B cell (primary cell): ENCODE measurements at regions of chr10 and their contacts with region 1.

Region 1: GRCh38 chr10:72048450-72049124 is 39.8 kb downstream of the SPOCK2 start:
- DNase-seq: peak; percentile 91
- ATAC-seq: peak; percentile 98
- H3K4me3 ChIP-seq: no peak overlapping the region
- H3K4me3 Mint-ChIP-seq: no peak overlapping the region
- H3K27ac ChIP-seq: no peak overlapping the region
- H3K27ac Mint-ChIP-seq: no peak overlapping the region
- H3K4me1 ChIP-seq: no peaks in the 10 kb centered on the region
- H3K4me1 Mint-ChIP-seq: no peaks in the 10 kb centered on the region
- H3K27me3 ChIP-seq: no peaks in the 10 kb centered on the region
- H3K27me3 Mint-ChIP-seq: no peaks in the 10 kb centered on the region
- CTCF ChIP-seq: peak; percentile 99

Region 2: GRCh38 chr10:71899665-71900412 is 148.7 kb before region 1 on chr10:
- CTCF ChIA-PET with region 1: interaction called, 26 read pairs
- POLR2A ChIA-PET with region 1: no interaction called
- intact Hi-C with region 1: loop called (anchors 1 kb)
- DNase-seq: peak; percentile 36
- ATAC-seq: peak; percentile 26
- H3K4me3 ChIP-seq: no peak overlapping the region
- H3K4me3 Mint-ChIP-seq: no peak overlapping the region
- H3K27ac ChIP-seq: no peak overlapping the region
- H3K27ac Mint-ChIP-seq: no peak overlapping the region
- H3K4me1 ChIP-seq: peaks cover 0 to 10% of the 10 kb centered on the region in 2 donors
- H3K4me1 Mint-ChIP-seq: peaks cover 7% of the 10 kb centered on the region
- H3K27me3 ChIP-seq: no peaks in the 10 kb centered on the region
- H3K27me3 Mint-ChIP-seq: no peaks in the 10 kb centered on the region
- CTCF ChIP-seq: no peak

Region 3: GRCh38 chr10:72061491-72061890 is 12.9 kb after region 1 on chr10:
- CTCF ChIA-PET with region 1: interaction called, 57 read pairs
- POLR2A ChIA-PET with region 1: no interaction called
- intact Hi-C with region 1: no loop called
- DNase-seq: no peak
- ATAC-seq: peak; percentile 42
- H3K4me3 ChIP-seq: no peak overlapping the region
- H3K4me3 Mint-ChIP-seq: no peak overlapping the region
- H3K27ac ChIP-seq: no peak overlapping the region
- H3K27ac Mint-ChIP-seq: no peak overlapping the region
- H3K4me1 ChIP-seq: no peaks in the 10 kb centered on the region
- H3K4me1 Mint-ChIP-seq: peaks cover 8% of the 10 kb centered on the region
- H3K27me3 ChIP-seq: no peaks in the 10 kb centered on the region
- H3K27me3 Mint-ChIP-seq: no peaks in the 10 kb centered on the region
- CTCF ChIP-seq: no peak

Region 4: GRCh38 chr10:72079356-72079755 is 30.8 kb after region 1 on chr10:
- CTCF ChIA-PET with region 1: interaction called, 11 read pairs
- POLR2A ChIA-PET with region 1: interaction called, 13 read pairs
- intact Hi-C with region 1: no loop called
- DNase-seq: peak; percentile 90
- ATAC-seq: peak; percentile 84
- H3K4me3 ChIP-seq: peak overlapping the region in 2 of 5 experiments; percentile 14 to 15
- H3K4me3 Mint-ChIP-seq: peak overlapping the region; percentile 83
- H3K27ac ChIP-seq: peak overlapping the region; percentile 30 to 69
- H3K27ac Mint-ChIP-seq: peak overlapping the region; percentile 90
- H3K4me1 ChIP-seq: peaks cover 38 to 66% of the 10 kb centered on the region in 2 donors
- H3K4me1 Mint-ChIP-seq: peaks cover 77% of the 10 kb centered on the region
- H3K27me3 ChIP-seq: no peaks in the 10 kb centered on the region
- H3K27me3 Mint-ChIP-seq: no peaks in the 10 kb centered on the region
- CTCF ChIP-seq: no peak

Region 5: DNA sequence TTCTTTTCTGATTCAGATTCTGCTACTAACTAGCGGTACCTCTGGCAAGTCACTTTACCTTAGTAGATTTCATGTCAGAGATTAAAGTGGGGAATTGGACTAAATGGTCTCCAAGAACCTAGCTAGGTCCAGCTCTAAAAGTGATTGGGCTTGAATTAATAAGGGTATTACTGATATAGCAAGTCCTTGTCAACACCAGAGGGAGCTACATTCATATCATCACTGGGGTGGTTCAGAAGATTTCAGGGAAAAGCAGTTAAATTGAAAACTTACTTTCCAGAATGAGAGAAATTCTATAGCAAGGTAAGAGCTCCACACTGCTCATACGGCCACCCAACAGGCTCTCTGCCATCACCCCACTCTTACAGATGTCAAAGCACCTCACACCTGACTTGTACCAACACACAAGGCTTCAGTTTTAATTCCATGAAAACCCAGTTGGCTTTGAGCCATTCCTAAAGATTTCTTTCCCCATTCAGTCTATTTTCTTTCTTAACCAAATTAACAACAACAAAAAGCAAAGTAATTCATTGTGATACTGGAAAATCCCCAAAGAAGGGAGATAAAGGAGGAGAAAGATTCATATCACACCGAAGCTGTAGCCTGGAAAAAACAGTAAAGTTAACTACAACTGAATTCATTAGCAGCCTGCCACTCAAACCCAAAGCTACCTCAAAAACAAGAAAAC is 77.7 kb after region 1 on chr10:
- CTCF ChIA-PET with region 1: interaction called, 18 read pairs
- POLR2A ChIA-PET with region 1: no interaction called
- intact Hi-C with region 1: no loop called
- DNase-seq: peak; percentile 53
- ATAC-seq: no peak
- H3K4me3 ChIP-seq: no peak overlapping the region
- H3K4me3 Mint-ChIP-seq: no peak overlapping the region
- H3K27ac ChIP-seq: no peak overlapping the region
- H3K27ac Mint-ChIP-seq: no peak overlapping the region
- H3K4me1 ChIP-seq: no peaks in the 10 kb centered on the region
- H3K4me1 Mint-ChIP-seq: no peaks in the 10 kb centered on the region
- H3K27me3 ChIP-seq: no peaks in the 10 kb centered on the region
- H3K27me3 Mint-ChIP-seq: no peaks in the 10 kb centered on the region
- CTCF ChIP-seq: peak; percentile 25

Region 6: DNA sequence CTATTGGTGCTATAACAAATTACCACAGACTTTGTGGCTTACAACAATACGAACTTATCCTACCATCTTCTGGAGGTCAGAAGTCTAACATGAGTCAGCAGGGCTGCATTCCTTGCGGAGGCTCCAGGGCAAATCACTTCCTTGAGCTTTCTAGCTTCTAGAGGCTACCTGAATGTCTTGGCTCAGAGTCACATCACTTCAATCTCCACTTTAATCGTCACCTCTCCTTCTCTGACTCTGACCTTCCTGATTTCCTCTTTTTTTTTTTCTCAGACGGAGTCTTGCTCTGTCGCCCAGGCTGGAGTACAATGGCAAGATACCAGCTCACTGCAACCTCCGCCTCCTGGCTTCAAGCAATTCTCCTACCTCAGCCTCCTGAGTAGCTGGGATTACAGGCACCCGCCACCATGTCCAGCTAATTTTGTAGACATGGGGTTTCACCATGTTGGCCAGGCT is 122.6 kb after region 1 on chr10:
- CTCF ChIA-PET with region 1: no interaction called
- POLR2A ChIA-PET with region 1: no interaction called
- intact Hi-C with region 1: no loop called
- DNase-seq: no peak
- ATAC-seq: no peak
- H3K4me3 ChIP-seq: no peak overlapping the region
- H3K4me3 Mint-ChIP-seq: no peak overlapping the region
- H3K27ac ChIP-seq: no peak overlapping the region
- H3K27ac Mint-ChIP-seq: no peak overlapping the region
- H3K4me1 ChIP-seq: peaks cover 12% of the 10 kb centered on the region in 2 donors
- H3K4me1 Mint-ChIP-seq: peaks cover 14% of the 10 kb centered on the region
- H3K27me3 ChIP-seq: no peaks in the 10 kb centered on the region
- H3K27me3 Mint-ChIP-seq: no peaks in the 10 kb centered on the region
- CTCF ChIP-seq: no peak

Region 7: DNA sequence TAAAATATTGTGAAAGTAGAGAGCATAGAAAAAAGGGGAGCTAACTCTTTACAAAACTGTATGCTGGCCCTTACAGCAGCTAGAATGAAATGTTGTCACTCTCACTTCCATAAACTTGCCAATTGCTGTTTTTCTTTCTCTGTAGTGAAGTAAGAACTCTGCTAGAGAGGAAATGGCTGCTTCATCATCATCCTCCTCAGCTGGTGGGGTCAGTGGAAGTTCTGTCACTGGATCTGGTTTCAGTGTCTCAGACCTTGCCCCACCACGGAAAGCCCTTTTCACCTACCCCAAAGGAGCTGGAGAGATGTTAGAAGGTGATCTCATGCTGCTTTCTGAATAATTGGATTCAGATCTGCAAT is 175.1 kb after region 1 on chr10:
- CTCF ChIA-PET with region 1: interaction called, 25 read pairs
- POLR2A ChIA-PET with region 1: no interaction called
- intact Hi-C with region 1: no loop called
- DNase-seq: peak; percentile 34
- ATAC-seq: peak; percentile 24
- H3K4me3 ChIP-seq: no peak overlapping the region
- H3K4me3 Mint-ChIP-seq: peak overlapping the region; percentile 44
- H3K27ac ChIP-seq: peak overlapping the region; percentile 42 to 68
- H3K27ac Mint-ChIP-seq: peak overlapping the region; percentile 75
- H3K4me1 ChIP-seq: peaks cover 58 to 70% of the 10 kb centered on the region in 2 donors
- H3K4me1 Mint-ChIP-seq: peaks cover 55% of the 10 kb centered on the region
- H3K27me3 ChIP-seq: no peaks in the 10 kb centered on the region
- H3K27me3 Mint-ChIP-seq: no peaks in the 10 kb centered on the region
- CTCF ChIP-seq: no peak

Region 8: DNA sequence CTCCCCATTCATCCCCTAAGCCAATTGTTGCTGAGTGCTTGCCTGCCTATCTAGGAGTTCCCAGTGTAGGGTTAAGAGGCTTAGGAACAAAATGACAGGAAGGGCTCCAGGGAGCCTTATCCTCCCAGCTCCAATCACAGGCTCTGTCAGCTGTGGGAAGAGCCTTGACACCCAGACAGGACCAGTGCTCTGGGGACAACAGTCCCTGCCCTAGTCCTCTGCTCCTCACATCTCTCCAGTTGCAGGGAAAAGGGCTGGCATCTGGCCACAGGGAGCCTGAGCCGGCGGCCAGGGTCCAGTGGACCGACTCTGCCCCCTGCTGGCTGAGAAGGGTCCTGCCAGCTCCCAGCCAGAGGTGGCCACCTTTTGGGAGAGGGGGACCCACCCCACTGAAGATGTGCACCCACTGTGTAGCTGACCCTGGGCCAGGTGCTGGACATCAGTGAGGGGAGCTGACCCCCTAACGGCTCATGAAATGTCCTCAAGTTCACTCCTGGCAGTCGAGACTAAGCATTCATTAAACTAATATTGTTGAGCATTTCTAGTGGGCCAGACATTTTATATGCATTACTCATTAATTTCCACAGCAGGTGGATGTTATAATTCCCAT is 288.5 kb after region 1 on chr10:
- CTCF ChIA-PET with region 1: interaction called, 58 read pairs
- POLR2A ChIA-PET with region 1: interaction called, 5 read pairs
- intact Hi-C with region 1: loop called (anchors 1 kb)
- DNase-seq: peak; percentile 78
- ATAC-seq: no peak
- H3K4me3 ChIP-seq: no peak overlapping the region
- H3K4me3 Mint-ChIP-seq: no peak overlapping the region
- H3K27ac ChIP-seq: no peak overlapping the region
- H3K27ac Mint-ChIP-seq: peak overlapping the region; percentile 27
- H3K4me1 ChIP-seq: peaks cover 51 to 61% of the 10 kb centered on the region in 2 donors
- H3K4me1 Mint-ChIP-seq: peaks cover 60% of the 10 kb centered on the region
- H3K27me3 ChIP-seq: no peaks in the 10 kb centered on the region
- H3K27me3 Mint-ChIP-seq: no peaks in the 10 kb centered on the region
- CTCF ChIP-seq: peak; percentile 98